MCF 10A (cell line): ENCODE measurements at regions of chr7 and their contacts with region 1.

Region 1: GRCh38 chr7:7681179-7681935 is 37.0 kb downstream of the RPA3 start:
- DNase-seq: peak; percentile 77
- H3K4me3 Mint-ChIP-seq: no peak overlapping the region
- H3K27ac Mint-ChIP-seq: peak overlapping the region; percentile 75
- H3K4me1 Mint-ChIP-seq: peaks cover 15% of the 10 kb centered on the region
- H3K27me3 Mint-ChIP-seq: no peaks in the 10 kb centered on the region
- CTCF ChIP-seq: peak; percentile 47

Region 2: DNA sequence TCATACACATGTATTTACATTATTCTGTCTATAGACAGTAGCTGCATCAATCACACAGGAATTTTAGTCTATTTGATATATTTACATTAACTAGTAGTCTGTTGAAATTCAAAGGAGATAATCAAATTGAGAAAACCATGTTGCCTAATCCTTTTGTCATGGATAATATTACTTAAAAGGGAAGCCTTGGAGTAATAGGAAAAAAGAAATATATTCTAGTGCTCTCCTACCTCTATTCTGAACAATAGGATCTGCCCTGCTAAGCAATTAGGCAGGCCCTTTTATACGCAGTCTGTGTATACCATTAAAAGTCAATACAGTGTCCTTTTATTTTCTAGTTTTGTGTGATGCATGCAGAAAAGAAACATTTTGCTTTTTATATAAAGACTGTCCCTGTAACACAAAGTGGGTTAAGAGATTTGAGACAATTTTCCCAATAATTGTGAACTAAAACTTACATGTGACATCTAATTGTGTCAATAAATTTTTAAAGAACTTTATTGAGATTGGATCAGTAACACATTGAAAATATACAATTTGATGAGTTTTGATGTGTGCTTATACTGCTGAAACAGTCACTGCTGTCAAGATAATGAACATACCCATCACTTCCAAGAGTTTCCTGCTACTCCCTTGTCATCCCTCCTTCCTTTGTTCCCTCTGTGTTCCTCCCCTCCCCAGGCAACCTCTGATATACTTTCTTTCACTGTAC is 16.2 kb before region 1 on chr7:
- CTCF ChIA-PET with region 1: interaction called, 12 read pairs
- POLR2A ChIA-PET with region 1: interaction called, 3 read pairs
- intact Hi-C with region 1: no loop called
- DNase-seq: no peak
- H3K4me3 Mint-ChIP-seq: no peak overlapping the region
- H3K27ac Mint-ChIP-seq: no peak overlapping the region
- H3K4me1 Mint-ChIP-seq: no peaks in the 10 kb centered on the region
- H3K27me3 Mint-ChIP-seq: no peaks in the 10 kb centered on the region
- CTCF ChIP-seq: no peak

Region 3: GRCh38 chr7:7719236-7719635 is 37.9 kb after region 1 on chr7:
- CTCF ChIA-PET with region 1: interaction called, 15 read pairs
- POLR2A ChIA-PET with region 1: interaction called, 24 read pairs
- intact Hi-C with region 1: no loop called
- DNase-seq: peak; percentile 96
- H3K4me3 Mint-ChIP-seq: peak overlapping the region; percentile 55
- H3K27ac Mint-ChIP-seq: peak overlapping the region; percentile 90
- H3K4me1 Mint-ChIP-seq: peaks cover 18% of the 10 kb centered on the region
- H3K27me3 Mint-ChIP-seq: no peaks in the 10 kb centered on the region
- CTCF ChIP-seq: no peak

Region 4: DNA sequence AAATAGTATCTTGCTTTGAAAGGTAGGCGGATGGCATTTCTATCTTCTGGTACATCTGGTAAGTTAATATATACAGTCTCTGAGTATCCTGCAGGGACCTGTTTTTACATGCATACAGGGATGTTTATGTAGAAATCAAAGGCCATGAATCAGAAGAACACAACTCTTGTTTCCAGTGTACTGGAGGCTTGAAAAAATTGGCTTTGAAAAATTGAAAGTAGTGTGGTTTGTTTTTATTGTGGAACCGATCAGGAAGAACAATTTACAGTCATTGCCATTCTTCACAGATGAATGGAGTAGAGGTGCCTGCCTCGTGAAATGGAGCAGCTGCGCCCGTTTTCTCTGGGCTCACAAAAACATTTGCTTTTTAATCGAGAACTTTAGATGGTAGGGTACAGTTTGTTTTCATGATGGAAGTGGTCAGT is 91.1 kb after region 1 on chr7:
- CTCF ChIA-PET with region 1: interaction called, 10 read pairs
- POLR2A ChIA-PET with region 1: interaction called, 16 read pairs
- intact Hi-C with region 1: no loop called
- DNase-seq: peak; percentile 58
- H3K4me3 Mint-ChIP-seq: peak overlapping the region; percentile 76
- H3K27ac Mint-ChIP-seq: peak overlapping the region; percentile 92
- H3K4me1 Mint-ChIP-seq: peaks cover 43% of the 10 kb centered on the region
- H3K27me3 Mint-ChIP-seq: no peaks in the 10 kb centered on the region
- CTCF ChIP-seq: no peak

Region 5: GRCh38 chr7:8035647-8036518 is 354.5 kb after region 1 on chr7:
- CTCF ChIA-PET with region 1: interaction called, 23 read pairs
- POLR2A ChIA-PET with region 1: interaction called, 6 read pairs
- intact Hi-C with region 1: loop called (anchors 1 kb)
- DNase-seq: peak; percentile 52
- H3K4me3 Mint-ChIP-seq: no peak overlapping the region
- H3K27ac Mint-ChIP-seq: no peak overlapping the region
- H3K4me1 Mint-ChIP-seq: no peaks in the 10 kb centered on the region
- H3K27me3 Mint-ChIP-seq: no peaks in the 10 kb centered on the region
- CTCF ChIP-seq: peak; percentile 50

Region 6: DNA sequence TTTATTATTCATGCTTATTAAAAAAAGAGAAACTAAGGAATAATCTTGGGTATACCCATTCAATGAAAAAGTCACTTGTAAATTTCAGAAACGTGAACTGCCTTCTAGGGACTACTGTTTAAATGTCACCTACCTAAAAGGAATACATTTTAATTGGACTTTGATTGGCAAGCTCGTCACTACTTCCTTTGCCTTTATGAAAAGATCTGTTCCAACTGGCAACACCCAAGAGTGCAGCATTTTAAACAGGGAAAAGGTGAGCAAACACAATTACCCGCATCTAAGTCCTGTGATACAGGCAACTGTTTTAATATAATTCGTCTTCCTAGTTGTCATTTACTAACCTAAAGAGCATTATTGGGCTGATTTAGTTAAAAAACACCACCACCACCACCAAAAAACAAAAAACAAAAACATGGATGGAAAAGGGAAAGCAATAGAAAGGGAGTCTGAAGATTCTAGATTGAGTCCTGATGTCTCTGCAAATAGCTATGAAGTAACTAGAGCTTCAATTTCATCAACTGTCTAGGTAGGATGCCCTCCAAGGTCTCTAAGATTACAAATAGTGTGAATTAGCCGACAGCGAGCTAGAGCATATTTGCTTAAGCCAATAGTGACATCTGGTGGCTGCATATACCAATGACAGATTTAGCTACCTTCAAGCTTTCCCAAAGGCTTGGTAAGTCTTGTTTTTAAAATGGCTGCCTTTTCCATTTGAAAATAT is 614.4 kb after region 1 on chr7:
- CTCF ChIA-PET with region 1: interaction called, 17 read pairs
- POLR2A ChIA-PET with region 1: no interaction called
- intact Hi-C with region 1: loop called (anchors 1 kb)
- DNase-seq: peak; percentile 85
- H3K4me3 Mint-ChIP-seq: no peak overlapping the region
- H3K27ac Mint-ChIP-seq: no peak overlapping the region
- H3K4me1 Mint-ChIP-seq: peaks cover 7% of the 10 kb centered on the region
- H3K27me3 Mint-ChIP-seq: no peaks in the 10 kb centered on the region
- CTCF ChIP-seq: peak; percentile 65